Heart right ventricle (tissue), 16 donors: ENCODE measurements at regions of chr4 and their contacts with region 1.

Region 1: DNA sequence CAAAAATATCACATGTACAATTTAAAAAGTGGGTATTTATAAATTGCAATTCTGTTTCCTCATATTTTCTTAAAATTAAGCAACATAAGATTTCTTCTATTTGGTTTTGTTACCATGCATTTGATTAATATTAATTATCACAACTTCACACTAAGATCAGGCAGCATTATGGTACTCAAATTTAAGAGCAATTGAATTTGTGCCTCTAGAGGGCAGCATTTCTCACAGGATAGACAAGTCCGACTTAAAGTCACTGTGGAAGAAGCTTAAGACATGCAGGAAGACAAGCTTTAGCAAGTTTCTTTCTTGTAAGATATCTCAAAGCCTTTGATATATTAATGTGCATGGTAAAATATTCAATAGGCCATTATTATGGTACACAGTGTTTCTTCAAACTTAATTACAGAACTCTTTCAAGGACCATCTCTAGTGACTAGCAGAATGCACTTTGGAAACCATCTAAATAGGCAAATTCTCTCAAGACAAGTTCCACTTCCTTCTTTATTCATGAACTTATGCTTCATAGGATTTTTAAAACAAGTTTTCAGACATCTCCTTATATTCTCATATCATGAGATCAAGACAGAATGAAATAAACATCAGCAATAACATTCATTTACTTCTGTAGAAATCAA is 35.0 kb downstream of the FBXW7 start:
- DNase-seq: peak in 1 of 2 donors; percentile 82
- ATAC-seq: peak in 7 of 8 donors; percentile 55 to 89 (median 73)
- H3K4me3 ChIP-seq: no peak overlapping the region
- H3K27ac ChIP-seq: no peak overlapping the region
- H3K4me1 ChIP-seq: peaks cover 0 to 15% (median 0%) of the 10 kb centered on the region in 9 donors
- H3K27me3 ChIP-seq: no peaks in the 10 kb centered on the region
- CTCF ChIP-seq: peak; percentile 63 to 89 (median 84)

Region 2: DNA sequence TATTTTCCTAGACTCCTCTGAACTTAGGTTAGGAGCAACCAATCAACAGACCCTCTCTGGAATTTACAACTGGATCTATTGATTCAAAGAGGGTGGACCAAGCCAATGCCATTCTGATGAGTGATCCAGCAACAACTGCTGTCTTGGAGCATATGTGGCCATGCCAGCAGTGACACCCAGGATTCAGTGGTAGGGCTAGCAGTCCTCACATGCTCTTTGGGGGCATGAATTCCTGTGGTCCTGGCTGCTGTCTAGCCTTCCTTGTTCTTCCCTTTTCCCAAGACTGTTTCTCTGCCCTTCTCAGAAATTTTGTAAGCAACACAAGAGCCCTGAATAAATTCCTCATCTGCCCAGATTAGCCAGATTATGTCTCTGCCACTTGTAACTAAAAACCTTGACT is 678.6 kb before region 1 on chr4:
- intact Hi-C with region 1: no loop called
- DNase-seq: no peak
- ATAC-seq: no peak
- H3K4me3 ChIP-seq: no peak overlapping the region
- H3K27ac ChIP-seq: no peak overlapping the region
- H3K4me1 ChIP-seq: no peaks in the 10 kb centered on the region
- H3K27me3 ChIP-seq: no peaks in the 10 kb centered on the region
- CTCF ChIP-seq: no peak

Region 3: DNA sequence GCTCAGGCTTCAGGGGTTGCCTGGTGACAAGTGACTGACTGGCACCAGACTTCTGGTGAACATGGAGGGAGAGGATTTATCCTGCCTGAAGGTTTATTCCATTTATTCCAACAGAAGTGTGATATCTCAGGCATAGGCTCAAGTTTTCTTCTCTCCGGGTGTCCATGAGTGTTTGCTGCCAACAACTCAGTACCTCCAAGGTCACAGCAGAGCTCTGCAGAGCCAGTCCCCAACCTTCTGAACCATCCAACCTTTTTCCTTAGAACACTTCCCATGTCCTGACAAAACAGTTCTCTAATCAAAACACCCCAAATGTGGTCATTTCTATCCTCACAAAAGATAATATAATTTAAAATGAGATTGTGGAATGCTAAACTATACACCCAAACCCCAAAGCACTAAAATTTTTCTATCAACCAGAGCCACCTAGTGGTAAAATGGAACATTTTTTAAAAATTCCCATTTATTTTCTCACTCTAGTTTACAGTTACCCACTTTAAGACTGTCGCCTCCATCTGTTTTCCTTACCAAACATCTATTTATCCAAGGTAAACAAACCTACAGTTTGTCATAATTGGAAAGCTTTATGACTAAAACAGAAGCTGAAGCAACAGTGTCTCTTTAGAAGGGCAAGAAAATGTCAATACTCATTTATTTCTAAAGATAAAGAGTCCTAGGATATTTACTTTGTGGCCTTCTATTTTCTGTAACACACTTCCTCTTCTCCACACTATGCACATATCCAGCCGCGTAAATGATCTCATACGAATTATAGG is 139.3 kb after region 1 on chr4:
- intact Hi-C with region 1: loop called (anchors 2 to 10 kb)
- DNase-seq: no peak
- ATAC-seq: peak in 4 of 8 donors; percentile 45 to 59 (median 56)
- H3K4me3 ChIP-seq: no peak overlapping the region
- H3K27ac ChIP-seq: peak overlapping the region in 1 of 10 donors; percentile 28
- H3K4me1 ChIP-seq: peaks cover 0 to 50% (median 6%) of the 10 kb centered on the region in 9 donors
- H3K27me3 ChIP-seq: no peaks in the 10 kb centered on the region
- CTCF ChIP-seq: peak; percentile 43 to 80 (median 67)

Region 4: GRCh38 chr4:154292589-154292988 is 1791.7 kb after region 1 on chr4:
- intact Hi-C with region 1: no loop called
- DNase-seq: no peak
- ATAC-seq: no peak
- H3K4me3 ChIP-seq: no peak overlapping the region
- H3K27ac ChIP-seq: no peak overlapping the region
- H3K4me1 ChIP-seq: no peaks in the 10 kb centered on the region
- H3K27me3 ChIP-seq: no peaks in the 10 kb centered on the region
- CTCF ChIP-seq: no peak